Dendritic cell treated with granulocyte-macrophage colony-stimulating factor and Interleukin-4, amounts not matched to agents 40 ng/mL and 50 ng/mL, for 4 days (primary cell): ENCODE measurements at regions of chr9 and their contacts with region 1.

Region 1: DNA sequence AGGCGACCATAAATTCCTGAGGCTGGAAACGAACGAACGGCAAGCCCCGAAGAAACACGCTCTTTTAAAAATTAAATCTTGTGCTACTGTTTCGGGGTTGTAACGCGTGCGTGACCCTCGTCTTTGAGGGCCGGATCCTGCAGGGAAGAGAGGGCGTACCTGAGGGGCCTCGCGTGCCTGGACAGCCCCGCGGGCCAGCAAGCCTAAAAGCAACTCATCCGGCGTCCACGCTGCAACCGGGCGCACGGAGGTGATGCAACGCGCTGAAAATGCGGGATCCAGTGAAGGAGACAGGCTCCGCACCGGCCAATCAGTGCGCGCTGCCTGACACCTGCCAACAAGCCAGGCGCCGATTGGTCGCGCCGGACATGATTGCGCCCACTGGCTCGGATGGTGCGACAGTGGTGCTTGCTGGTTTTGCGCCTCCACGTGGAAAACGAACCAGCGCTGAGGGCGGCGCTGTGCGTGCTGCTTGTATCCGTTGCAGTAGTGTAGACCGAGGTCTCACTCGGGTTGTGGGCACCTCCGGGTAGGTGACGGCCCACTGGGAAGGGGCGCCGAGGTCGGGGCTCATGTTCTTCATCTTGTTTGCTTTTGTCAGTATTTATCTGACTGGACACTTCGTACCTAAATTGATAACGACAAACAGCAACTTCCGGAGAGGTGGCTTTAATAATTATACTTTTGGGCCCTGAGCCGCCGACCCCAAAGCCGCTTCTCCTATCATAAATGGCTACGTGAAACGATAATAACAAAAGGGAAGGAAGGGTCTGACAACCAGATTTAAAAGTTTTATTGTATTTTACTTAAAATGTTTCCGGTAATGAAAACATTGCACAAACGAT is at the start of gene IARS1:
- H3K4me3 Mint-ChIP-seq: peak within 1 kb of the TSS; percentile 87
- H3K27ac Mint-ChIP-seq: peak within 1 kb of the TSS; percentile 83
- H3K4me1 Mint-ChIP-seq: peaks cover 24% of the 10 kb centered on the region
- H3K27me3 Mint-ChIP-seq: no peaks in the 10 kb centered on the region

Region 2: DNA sequence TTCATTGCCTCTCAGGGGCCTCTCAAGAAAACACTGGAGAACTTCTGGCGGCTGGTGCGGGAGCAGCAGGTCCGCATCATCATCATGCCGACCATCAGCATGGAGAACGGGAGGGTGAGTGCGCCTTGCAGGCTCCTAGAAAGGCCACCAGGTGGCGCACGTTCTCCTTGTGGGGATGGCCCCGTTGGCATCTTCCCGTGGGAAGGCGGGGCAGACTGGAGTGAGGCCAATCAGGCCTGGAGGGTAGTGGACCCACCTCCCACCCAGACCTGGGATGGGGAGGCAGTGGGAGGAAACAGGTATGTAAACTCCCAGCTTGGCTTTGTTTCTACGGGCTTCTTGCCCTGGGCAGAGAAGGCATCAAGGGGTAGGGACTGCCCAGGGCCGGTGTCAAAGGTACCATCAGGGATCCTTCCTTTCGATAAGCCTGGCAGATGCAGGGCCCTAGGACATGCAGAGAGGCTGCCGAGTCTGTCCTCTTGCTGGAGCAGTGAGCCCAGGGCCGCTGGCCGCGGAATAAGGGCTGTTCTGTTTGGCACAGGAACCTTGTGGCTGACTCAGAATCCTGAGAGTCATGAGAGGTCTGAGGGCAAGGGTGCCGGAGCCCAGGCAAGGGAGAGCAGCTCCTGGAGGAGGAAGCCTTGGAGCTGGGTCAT is 159.6 kb before region 1 on chr9:
- intact Hi-C with region 1: loop called (anchors 10 kb)
- H3K4me3 Mint-ChIP-seq: no peak overlapping the region
- H3K27ac Mint-ChIP-seq: no peak overlapping the region
- H3K4me1 Mint-ChIP-seq: peaks cover 7% of the 10 kb centered on the region
- H3K27me3 Mint-ChIP-seq: peaks cover 51% of the 10 kb centered on the region

Region 3: DNA sequence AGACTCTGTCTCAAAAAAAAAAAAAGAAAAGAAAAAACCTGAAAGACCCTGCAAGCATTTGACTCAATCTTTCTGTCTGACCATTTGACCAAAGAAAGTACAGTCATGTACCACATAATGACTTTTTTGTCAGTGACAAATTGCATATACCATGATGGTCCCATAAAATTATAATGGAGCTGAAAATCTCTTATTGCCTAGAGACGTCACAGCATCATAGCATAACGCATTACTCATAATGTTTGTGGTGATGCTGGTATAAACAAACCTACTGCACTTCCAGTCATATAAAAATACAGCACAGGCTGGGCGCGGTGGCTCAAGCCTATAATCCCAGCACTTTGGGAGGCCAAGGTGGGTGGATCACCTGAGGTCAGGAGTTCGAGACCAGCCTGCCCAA is 231.6 kb after region 1 on chr9:
- intact Hi-C with region 1: no loop called
- H3K4me3 Mint-ChIP-seq: no peak overlapping the region
- H3K27ac Mint-ChIP-seq: no peak overlapping the region
- H3K4me1 Mint-ChIP-seq: no peaks in the 10 kb centered on the region
- H3K27me3 Mint-ChIP-seq: no peaks in the 10 kb centered on the region